ENCODE measurements at regions of chr14 and their contacts with region 1.

Region 1: DNA sequence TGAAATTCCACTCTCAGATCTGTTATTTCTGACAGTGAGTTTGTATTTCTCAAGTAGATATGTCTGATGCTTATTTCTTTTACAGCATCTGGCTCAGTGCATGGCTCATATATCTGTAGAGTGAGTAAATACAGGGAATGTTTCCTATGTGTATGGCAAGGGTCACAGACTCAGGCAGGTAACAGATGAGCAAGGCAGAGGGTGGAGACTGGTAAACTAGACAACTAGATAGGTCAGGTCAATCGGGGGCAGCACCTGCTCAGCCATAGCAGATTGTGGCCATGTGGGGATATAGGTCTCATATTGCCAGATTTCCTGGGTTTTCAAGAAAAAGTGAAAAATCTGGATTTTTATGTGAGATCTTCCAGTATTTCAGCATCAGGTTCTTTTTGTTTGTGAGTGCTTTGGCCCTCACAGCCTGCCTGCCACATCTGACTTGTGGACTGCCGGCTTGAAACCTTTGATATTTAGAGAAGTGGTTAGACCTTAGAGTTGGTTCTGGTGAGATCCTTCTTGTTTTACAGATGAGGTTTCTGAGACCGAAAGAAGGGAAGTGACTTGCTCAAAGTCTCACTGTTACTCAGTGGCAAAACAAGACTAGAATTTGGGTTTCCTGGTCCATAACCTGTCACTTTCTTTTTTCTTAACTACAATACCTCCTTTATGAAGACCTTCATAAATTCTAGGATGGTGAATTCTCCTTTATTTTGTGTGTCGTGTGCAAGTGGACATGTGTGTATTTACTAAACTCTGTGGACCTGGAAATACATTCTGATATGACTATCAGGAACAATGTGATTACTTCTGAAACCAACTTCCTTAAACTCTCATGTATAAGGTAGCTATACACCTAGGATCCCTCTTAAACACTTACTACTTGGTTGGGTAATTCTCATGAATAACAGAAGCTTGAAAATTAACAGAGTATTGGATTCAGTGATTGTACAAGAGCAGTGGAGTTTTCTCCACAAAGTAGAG is 34.4 kb downstream of the PROX2 start:
- DNase-seq: no peak
- ATAC-seq: peak; percentile 84
- H3K4me3 Mint-ChIP-seq: peak overlapping the region; percentile 63
- H3K27ac Mint-ChIP-seq: peak overlapping the region; percentile 93
- H3K4me1 Mint-ChIP-seq: peaks cover 59% of the 10 kb centered on the region
- H3K27me3 Mint-ChIP-seq: no peaks in the 10 kb centered on the region
- CTCF ChIP-seq: no peak

Region 2: GRCh38 chr14:74824997-74825396 is 16.5 kb before region 1 on chr14:
- CTCF ChIA-PET with region 1: no interaction called
- POLR2A ChIA-PET with region 1: no interaction called
- intact Hi-C with region 1: loop called (anchors 2 kb)
- DNase-seq: no peak
- ATAC-seq: no peak
- H3K4me3 Mint-ChIP-seq: no peak overlapping the region
- H3K27ac Mint-ChIP-seq: no peak overlapping the region
- H3K4me1 Mint-ChIP-seq: peaks cover 11% of the 10 kb centered on the region
- H3K27me3 Mint-ChIP-seq: no peaks in the 10 kb centered on the region
- CTCF ChIP-seq: no peak

Region 3: GRCh38 chr14:75015496-75015895 is 174.0 kb after region 1 on chr14:
- CTCF ChIA-PET with region 1: no interaction called
- POLR2A ChIA-PET with region 1: interaction called, 17 read pairs
- intact Hi-C with region 1: no loop called
- DNase-seq: no peak
- ATAC-seq: no peak
- H3K4me3 Mint-ChIP-seq: no peak overlapping the region
- H3K27ac Mint-ChIP-seq: no peak overlapping the region
- H3K4me1 Mint-ChIP-seq: no peaks in the 10 kb centered on the region
- H3K27me3 Mint-ChIP-seq: no peaks in the 10 kb centered on the region
- CTCF ChIP-seq: no peak